ENCODE measurements at regions of chr20 and their contacts with region 1.

Region 1: GRCh38 chr20:47847868-47848531 is 62.7 kb upstream of the SULF2 start:
- DNase-seq: peak; percentile 38
- ATAC-seq: peak; percentile 10
- H3K4me3 ChIP-seq: no peak overlapping the region
- H3K27ac ChIP-seq: peak overlapping the region; percentile 83
- H3K4me1 ChIP-seq: peaks cover 50% of the 10 kb centered on the region
- H3K27me3 ChIP-seq: no peaks in the 10 kb centered on the region
- CTCF ChIP-seq: no peak

Region 2: DNA sequence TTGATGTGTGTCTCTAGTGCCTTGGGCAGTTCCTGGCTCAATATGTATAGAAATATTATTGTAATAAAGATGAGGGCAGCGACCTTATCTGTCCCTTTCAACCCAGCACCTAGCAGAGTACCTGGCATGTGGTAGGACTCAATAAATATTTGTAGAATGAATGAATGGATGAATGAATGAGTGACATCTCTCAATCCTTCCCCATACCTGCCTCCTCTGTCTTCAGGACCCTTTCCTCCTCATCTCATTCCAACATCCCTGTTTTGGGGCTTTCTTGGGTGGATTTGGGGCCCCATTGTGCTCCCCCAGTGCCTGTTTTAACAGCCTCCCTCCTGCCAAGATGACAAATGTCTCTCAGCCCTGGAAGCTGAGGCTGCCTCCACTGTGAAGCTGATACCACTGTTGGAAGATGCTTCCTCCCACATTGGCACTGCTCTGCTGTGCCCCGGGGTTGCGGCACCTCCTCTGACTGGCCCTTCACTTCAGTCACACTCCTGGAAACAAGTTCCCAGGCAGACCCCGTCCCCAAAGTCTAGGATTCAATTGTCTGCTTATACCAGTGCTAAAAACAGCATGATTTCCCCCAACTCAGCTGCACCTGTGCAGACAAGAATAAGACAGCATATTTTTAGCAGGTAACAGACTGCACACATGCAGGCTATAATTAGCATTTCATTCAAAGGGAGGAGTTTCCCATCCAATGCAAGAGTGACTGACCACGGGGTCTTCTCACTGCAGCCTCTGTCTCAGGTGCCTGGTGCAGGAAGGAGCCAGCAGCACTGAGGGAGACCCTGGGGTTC is 31.5 kb before region 1 on chr20:
- CTCF ChIA-PET with region 1: interaction called, 4 read pairs
- POLR2A ChIA-PET with region 1: no interaction called
- intact Hi-C with region 1: loop called (anchors 1 kb)
- DNase-seq: no peak
- ATAC-seq: no peak
- H3K4me3 ChIP-seq: no peak overlapping the region
- H3K27ac ChIP-seq: peak overlapping the region; percentile 95
- H3K4me1 ChIP-seq: peaks cover 56% of the 10 kb centered on the region
- H3K27me3 ChIP-seq: no peaks in the 10 kb centered on the region
- CTCF ChIP-seq: no peak

Region 3: DNA sequence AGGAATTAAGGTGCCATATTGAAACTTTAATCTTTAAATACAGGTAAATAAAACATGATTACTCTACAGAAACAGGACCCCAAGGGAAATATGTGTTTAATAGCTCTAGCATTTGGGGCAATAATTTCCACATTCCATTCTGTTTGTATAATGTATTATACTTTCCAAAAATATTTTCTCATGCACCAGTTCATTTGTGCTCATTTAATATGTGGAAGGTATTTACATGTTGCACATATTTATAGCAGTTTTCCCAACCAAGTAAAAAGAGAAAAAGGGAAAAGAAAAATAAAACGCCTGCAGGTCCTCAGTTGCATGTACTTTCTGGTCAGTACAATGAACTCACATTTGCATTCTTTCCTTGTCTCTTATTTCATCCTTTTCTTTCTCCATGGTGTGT is 66.8 kb after region 1 on chr20:
- CTCF ChIA-PET with region 1: no interaction called
- POLR2A ChIA-PET with region 1: no interaction called
- intact Hi-C with region 1: loop called (anchors 5 kb)
- DNase-seq: no peak
- ATAC-seq: no peak
- H3K4me3 ChIP-seq: no peak overlapping the region
- H3K27ac ChIP-seq: peak overlapping the region; percentile 14
- H3K4me1 ChIP-seq: peaks cover 39% of the 10 kb centered on the region
- H3K27me3 ChIP-seq: no peaks in the 10 kb centered on the region
- CTCF ChIP-seq: no peak

Region 4: GRCh38 chr20:48098067-48098466 is 250.1 kb after region 1 on chr20:
- CTCF ChIA-PET with region 1: no interaction called
- POLR2A ChIA-PET with region 1: no interaction called
- intact Hi-C with region 1: no loop called
- DNase-seq: no peak
- ATAC-seq: no peak
- H3K4me3 ChIP-seq: no peak overlapping the region
- H3K27ac ChIP-seq: no peak overlapping the region
- H3K4me1 ChIP-seq: no peaks in the 10 kb centered on the region
- H3K27me3 ChIP-seq: no peaks in the 10 kb centered on the region
- CTCF ChIP-seq: no peak

Region 5: DNA sequence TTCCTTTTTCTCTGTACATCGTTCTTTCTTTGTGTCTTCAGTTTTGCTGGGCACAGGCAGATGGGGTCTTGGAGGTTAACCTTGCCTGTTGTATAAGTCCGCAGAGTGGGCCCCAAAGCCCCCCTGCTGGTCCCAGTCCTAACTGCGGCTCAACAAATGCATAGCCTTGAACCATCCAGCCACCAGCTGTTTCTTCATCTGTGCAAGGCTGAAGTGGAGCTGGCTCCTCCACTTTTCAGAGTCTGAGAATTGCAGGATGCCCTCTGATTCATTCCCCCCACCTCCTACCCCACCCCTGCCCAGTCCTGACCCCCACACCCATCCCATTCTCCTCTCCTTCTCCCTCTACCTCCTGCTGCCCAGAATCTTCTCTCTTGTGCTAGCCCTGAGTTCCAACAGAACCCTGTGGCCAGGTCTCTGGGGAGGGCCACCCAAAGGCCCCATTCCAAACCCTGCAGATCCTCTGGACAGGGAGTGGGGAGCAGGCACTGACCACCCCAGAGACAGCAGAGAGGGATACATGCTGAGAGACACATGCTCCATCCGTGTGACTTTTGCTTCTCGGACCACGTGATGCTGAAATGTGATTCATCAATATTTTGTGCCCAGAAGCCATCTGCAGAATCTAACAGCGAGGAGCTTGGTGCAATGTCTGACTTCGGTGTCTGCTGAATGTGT is 323.8 kb after region 1 on chr20:
- CTCF ChIA-PET with region 1: no interaction called
- POLR2A ChIA-PET with region 1: no interaction called
- intact Hi-C with region 1: no loop called
- DNase-seq: no peak
- ATAC-seq: no peak
- H3K4me3 ChIP-seq: no peak overlapping the region
- H3K27ac ChIP-seq: no peak overlapping the region
- H3K4me1 ChIP-seq: peaks cover 2% of the 10 kb centered on the region
- H3K27me3 ChIP-seq: no peaks in the 10 kb centered on the region
- CTCF ChIP-seq: no peak